HepG2 (cell line): ENCODE measurements at regions of chr4 and their contacts with region 1.

Region 1: DNA sequence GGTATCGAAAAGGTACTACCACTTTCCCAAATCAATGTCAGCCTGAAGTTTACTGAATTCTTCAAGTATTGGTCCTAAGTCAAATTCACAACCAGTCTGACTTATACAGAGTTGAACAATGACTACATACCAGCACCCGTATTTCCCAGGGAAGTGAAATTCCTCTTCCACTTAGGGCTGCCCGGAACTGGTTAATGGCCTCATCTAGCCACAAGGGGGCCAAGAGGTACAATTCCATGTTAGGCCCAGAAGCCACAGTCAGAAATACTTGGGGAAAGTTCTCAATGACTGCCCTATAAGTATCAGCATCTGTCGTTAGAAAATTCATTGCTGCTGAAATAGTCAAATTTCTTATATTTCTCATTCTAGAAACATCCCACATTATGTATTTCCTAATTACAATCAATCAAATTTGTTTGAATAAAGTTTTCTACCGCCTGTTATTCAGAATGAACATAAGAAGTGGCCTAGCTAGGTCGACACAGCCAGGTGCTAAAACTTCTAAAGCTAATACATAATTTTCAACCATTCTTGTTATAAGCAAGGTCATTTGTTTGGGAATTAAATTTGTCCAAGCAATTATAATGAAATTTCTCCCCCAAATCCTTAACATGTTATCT is 5.7 kb upstream of the PCDH7 start:
- DNase-seq: peak; percentile 19
- ATAC-seq: peak; percentile 94
- H3K4me3 ChIP-seq: no peak overlapping the region
- H3K27ac ChIP-seq: no peak overlapping the region
- H3K4me1 ChIP-seq: peaks cover 2% of the 10 kb centered on the region; the same call in 1 of the 2 replicates
- H3K27me3 ChIP-seq: peaks cover 3 to 25% of the 10 kb centered on the region in 2 experiments; a peak in 4 of 5 replicates
- CTCF ChIP-seq: peak; percentile 64
- EP300 ChIP-seq: no peak
- POLR2A ChIP-seq: no peak
- RAD21 ChIP-seq: no peak

Region 2: DNA sequence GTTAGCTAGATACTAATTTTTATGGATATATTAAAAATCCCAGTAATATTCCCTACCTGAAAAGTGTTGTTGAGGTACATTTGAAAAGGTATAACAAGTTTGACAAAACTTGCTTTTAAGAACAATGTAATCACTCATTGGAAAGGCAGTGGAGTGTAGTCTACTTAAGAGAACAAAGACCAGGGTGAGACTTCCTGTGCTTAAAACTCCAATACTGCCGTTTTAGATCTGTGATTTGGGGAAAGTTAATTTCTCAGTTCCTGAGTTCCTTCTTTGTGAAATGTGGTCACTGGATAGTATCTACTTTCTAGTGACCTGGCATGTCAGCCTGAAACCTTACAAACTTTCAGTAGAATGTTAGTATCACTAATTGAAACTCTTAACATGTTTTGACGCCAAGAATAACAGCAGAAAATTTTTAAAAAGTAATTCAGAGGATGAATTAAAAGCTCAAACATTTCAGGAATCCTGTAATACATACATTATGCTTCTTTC is 62.5 kb after region 1 on chr4:
- CTCF ChIA-PET with region 1: no interaction called
- POLR2A ChIA-PET with region 1: no interaction called
- in situ Hi-C with region 1: no loop called
- intact Hi-C with region 1: no loop called
- DNase-seq: no peak
- ATAC-seq: no peak
- H3K4me3 ChIP-seq: no peak overlapping the region
- H3K27ac ChIP-seq: no peak overlapping the region
- H3K4me1 ChIP-seq: no peaks in the 10 kb centered on the region
- H3K27me3 ChIP-seq: no peaks in the 10 kb centered on the region
- CTCF ChIP-seq: no peak
- EP300 ChIP-seq: no peak
- POLR2A ChIP-seq: no peak
- RAD21 ChIP-seq: no peak

Region 3: GRCh38 chr4:31674313-31674947 is 959.9 kb after region 1 on chr4:
- CTCF ChIA-PET with region 1: no interaction called
- POLR2A ChIA-PET with region 1: no interaction called
- in situ Hi-C with region 1: no loop called
- intact Hi-C with region 1: loop called (anchors 10 kb)
- DNase-seq: no peak
- ATAC-seq: no peak
- H3K4me3 ChIP-seq: no peak overlapping the region
- H3K27ac ChIP-seq: no peak overlapping the region
- H3K4me1 ChIP-seq: no peaks in the 10 kb centered on the region
- H3K27me3 ChIP-seq: no peaks in the 10 kb centered on the region
- CTCF ChIP-seq: no peak; the same call in 1 of the 2 replicates
- EP300 ChIP-seq: no peak
- POLR2A ChIP-seq: no peak
- RAD21 ChIP-seq: no peak